Activated CD4-positive, alpha-beta T cell treated with anti-CD3 and anti-CD28 coated beads for 36 hours (primary cell): ENCODE measurements at regions of chr1 and their contacts with region 1.

Region 1: DNA sequence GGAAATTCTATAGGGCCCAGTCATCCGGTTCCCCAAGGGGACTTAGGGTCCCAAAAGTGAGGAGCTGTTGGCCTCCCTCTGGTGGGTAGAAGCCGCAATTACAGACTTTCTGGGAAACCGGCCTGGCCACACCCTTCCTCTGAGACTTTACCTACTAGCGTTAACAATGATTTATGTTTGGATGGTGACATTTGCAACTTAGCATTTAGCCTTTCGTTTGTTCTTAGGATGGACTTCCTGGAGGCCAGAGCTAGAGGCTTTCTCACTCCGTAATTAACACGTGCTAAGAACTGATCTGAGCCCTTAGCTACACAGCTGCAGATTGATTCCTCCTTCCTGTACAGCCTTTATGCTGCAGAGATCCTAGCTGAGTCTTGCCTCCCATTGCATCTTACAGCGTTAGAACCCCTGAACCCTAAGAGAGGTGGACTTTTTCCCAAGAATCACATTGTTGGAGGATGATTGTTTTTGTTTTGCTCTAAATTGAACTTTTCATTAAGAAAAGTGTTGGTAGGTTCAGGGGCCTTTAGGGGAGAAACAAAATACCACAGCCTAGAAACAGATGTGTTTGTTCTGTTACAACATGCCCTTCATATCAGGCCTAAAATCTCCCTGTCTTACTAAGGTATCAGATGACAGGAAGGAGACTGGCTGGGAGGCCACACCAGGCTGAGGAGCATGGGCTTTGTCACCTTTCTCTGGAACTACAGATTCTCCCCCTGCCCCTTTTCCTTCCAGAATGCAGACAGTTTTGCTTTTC is 2.0 kb downstream of the S100A11 start:
- DNase-seq: peak; percentile 82
- ATAC-seq: peak; percentile 64
- H3K4me3 Mint-ChIP-seq: peak overlapping the region; percentile 82
- H3K27ac Mint-ChIP-seq: peak overlapping the region; percentile 90
- H3K4me1 Mint-ChIP-seq: peaks cover 41% of the 10 kb centered on the region
- H3K27me3 Mint-ChIP-seq: no peaks in the 10 kb centered on the region

Region 2: DNA sequence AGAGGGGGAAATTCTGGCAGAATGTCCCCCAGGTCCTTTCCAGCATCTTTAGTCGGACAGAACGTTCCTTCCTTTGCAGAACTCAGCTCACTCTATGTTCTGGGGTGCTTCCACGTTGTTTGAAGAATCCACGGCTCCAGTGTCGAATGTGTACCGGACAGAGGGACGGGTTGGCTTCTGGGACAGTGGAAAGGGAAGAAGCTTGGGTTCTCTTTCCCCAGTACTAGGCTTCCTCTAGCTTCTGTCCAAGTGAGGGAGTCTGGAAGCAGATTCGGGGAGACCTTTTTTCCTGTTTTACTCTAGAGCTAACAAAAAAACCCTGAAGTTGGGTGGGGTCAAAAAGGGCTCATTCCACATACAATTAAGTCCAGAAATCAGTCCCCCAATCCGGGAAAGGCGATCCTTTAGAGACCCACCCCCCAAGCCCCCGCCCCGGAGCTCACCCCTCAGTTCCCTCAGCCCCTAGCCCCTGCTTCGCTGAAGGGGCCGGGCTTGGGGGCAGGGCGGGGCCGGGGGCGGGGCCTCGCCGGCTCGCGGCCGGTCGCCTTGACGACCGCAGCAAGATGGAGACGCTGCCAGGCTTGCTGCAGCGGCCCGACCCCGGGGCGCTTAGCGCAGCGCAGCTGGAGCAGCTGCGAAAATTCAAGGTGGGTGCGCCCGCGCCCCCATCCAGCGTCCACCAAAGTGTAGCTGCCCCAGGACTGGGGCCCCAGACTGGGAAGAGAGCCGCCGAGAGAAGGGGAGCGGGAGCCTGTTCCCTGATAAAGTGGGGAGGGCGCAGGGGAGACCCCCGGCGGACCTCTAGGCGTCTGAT is 313.6 kb before region 1 on chr1 and contains the start of gene RIIAD1:
- CTCF ChIA-PET with region 1: no interaction called
- POLR2A ChIA-PET with region 1: no interaction called
- intact Hi-C with region 1: no loop called
- DNase-seq: peak; percentile 67
- ATAC-seq: peak; percentile 89
- H3K4me3 Mint-ChIP-seq: peak within 1 kb of the TSS; percentile 61
- H3K27ac Mint-ChIP-seq: no peak within 1 kb of the TSS
- H3K4me1 Mint-ChIP-seq: peaks cover 21% of the 10 kb centered on the region
- H3K27me3 Mint-ChIP-seq: peaks cover 55% of the 10 kb centered on the region
- total RNA-seq, gene RIIAD1: not detected

Region 3: GRCh38 chr1:151846062-151846568 is 188.7 kb before region 1 on chr1:
- CTCF ChIA-PET with region 1: no interaction called
- POLR2A ChIA-PET with region 1: no interaction called
- intact Hi-C with region 1: no loop called
- DNase-seq: peak; percentile 65
- ATAC-seq: peak; percentile 80
- H3K4me3 Mint-ChIP-seq: peak overlapping the region; percentile 0
- H3K27ac Mint-ChIP-seq: peak overlapping the region; percentile 78
- H3K4me1 Mint-ChIP-seq: peaks cover 34% of the 10 kb centered on the region
- H3K27me3 Mint-ChIP-seq: no peaks in the 10 kb centered on the region

Region 4: GRCh38 chr1:151909150-151910149 is 125.4 kb before region 1 on chr1 and contains the start of gene THEM4:
- CTCF ChIA-PET with region 1: interaction called, 11 read pairs
- POLR2A ChIA-PET with region 1: interaction called, 3 read pairs
- intact Hi-C with region 1: no loop called
- DNase-seq: peak; percentile 98
- ATAC-seq: peak; percentile 93
- H3K4me3 Mint-ChIP-seq: peak within 1 kb of the TSS; percentile 82
- H3K27ac Mint-ChIP-seq: peak within 1 kb of the TSS; percentile 91
- H3K4me1 Mint-ChIP-seq: peaks cover 42% of the 10 kb centered on the region
- H3K27me3 Mint-ChIP-seq: no peaks in the 10 kb centered on the region
- total RNA-seq, gene THEM4: 23.9 to 26.0 TPM

Region 5: GRCh38 chr1:151939779-151940178 is 95.0 kb before region 1 on chr1:
- CTCF ChIA-PET with region 1: interaction called, 4 read pairs
- POLR2A ChIA-PET with region 1: no interaction called
- intact Hi-C with region 1: loop called (anchors 1 to 2 kb)
- DNase-seq: no peak
- ATAC-seq: no peak
- H3K4me3 Mint-ChIP-seq: no peak overlapping the region
- H3K27ac Mint-ChIP-seq: no peak overlapping the region
- H3K4me1 Mint-ChIP-seq: peaks cover 27% of the 10 kb centered on the region
- H3K27me3 Mint-ChIP-seq: no peaks in the 10 kb centered on the region

Region 6: GRCh38 chr1:151945725-151946364 is 89.0 kb before region 1 on chr1:
- CTCF ChIA-PET with region 1: interaction called, 4 read pairs
- POLR2A ChIA-PET with region 1: interaction called, 3 read pairs
- intact Hi-C with region 1: loop called (anchors 1 to 2 kb)
- DNase-seq: peak; percentile 82
- ATAC-seq: peak; percentile 45
- H3K4me3 Mint-ChIP-seq: peak overlapping the region; percentile 42
- H3K27ac Mint-ChIP-seq: peak overlapping the region; percentile 88
- H3K4me1 Mint-ChIP-seq: peaks cover 42% of the 10 kb centered on the region
- H3K27me3 Mint-ChIP-seq: no peaks in the 10 kb centered on the region

Region 7: GRCh38 chr1:151968058-151968457 is 66.8 kb before region 1 on chr1:
- CTCF ChIA-PET with region 1: interaction called, 35 read pairs
- POLR2A ChIA-PET with region 1: interaction called, 4 read pairs
- intact Hi-C with region 1: no loop called
- DNase-seq: peak; percentile 63
- ATAC-seq: peak; percentile 78
- H3K4me3 Mint-ChIP-seq: no peak overlapping the region
- H3K27ac Mint-ChIP-seq: no peak overlapping the region
- H3K4me1 Mint-ChIP-seq: peaks cover 18% of the 10 kb centered on the region
- H3K27me3 Mint-ChIP-seq: no peaks in the 10 kb centered on the region

Region 8: DNA sequence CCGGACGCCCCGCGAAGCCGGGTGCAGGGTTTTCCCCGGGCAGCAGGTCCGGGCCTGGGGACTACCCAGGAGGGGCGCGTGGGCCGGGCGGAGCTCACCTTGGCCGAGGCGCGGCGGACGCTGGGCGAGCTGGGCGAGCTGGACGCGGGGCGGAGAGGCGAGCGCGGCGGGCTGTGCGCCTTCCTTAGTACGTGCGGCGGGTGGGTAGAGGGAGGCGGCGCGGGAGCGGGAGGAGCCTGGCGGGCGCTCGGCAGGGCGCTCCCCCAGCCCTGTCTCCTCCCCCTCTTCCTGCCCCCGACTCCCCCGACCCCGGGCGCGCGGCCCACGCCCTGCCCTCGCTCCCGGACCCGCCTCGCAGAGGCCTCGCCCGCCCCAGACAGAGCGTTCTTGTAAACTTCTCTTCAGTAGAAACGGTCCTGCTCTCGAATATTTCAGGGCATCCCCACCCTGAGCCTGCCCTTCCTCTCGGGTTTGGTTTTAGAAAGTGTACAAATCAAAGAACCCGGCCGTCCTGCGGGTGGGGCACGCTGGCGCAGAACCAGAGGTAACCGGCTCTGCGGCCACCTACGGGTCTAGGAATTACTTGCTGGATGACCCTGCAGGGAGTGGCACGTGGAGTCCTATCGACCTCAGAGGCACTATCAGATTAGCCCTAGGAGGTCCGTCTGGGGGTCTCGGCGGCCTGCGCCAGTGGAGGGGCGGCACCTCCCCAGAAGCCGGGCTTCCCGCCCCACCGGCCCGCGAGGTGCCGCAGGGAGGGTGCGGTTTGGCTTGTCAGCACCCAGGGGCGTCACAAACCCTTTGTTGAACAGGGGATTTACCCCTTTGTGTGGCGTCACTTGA is 41.0 kb before region 1 on chr1 and contains the start of gene S100A10:
- CTCF ChIA-PET with region 1: interaction called, 5 read pairs
- POLR2A ChIA-PET with region 1: no interaction called
- intact Hi-C with region 1: loop called in 1 of 2 experiments (anchors 2 kb)
- DNase-seq: peak; percentile 85
- ATAC-seq: peak; percentile 79
- H3K4me3 Mint-ChIP-seq: peak within 1 kb of the TSS; percentile 90
- H3K27ac Mint-ChIP-seq: peak within 1 kb of the TSS; percentile 94
- H3K4me1 Mint-ChIP-seq: peaks cover 48% of the 10 kb centered on the region
- H3K27me3 Mint-ChIP-seq: no peaks in the 10 kb centered on the region
- total RNA-seq, gene S100A10: 230 to 246 TPM

Region 9: GRCh38 chr1:152013664-152014237 is 21.1 kb before region 1 on chr1:
- CTCF ChIA-PET with region 1: interaction called, 22 read pairs
- POLR2A ChIA-PET with region 1: no interaction called
- intact Hi-C with region 1: no loop called
- DNase-seq: peak; percentile 72
- ATAC-seq: peak; percentile 49
- H3K4me3 Mint-ChIP-seq: no peak overlapping the region
- H3K27ac Mint-ChIP-seq: no peak overlapping the region
- H3K4me1 Mint-ChIP-seq: peaks cover 3% of the 10 kb centered on the region
- H3K27me3 Mint-ChIP-seq: peaks cover 9% of the 10 kb centered on the region

Region 10: DNA sequence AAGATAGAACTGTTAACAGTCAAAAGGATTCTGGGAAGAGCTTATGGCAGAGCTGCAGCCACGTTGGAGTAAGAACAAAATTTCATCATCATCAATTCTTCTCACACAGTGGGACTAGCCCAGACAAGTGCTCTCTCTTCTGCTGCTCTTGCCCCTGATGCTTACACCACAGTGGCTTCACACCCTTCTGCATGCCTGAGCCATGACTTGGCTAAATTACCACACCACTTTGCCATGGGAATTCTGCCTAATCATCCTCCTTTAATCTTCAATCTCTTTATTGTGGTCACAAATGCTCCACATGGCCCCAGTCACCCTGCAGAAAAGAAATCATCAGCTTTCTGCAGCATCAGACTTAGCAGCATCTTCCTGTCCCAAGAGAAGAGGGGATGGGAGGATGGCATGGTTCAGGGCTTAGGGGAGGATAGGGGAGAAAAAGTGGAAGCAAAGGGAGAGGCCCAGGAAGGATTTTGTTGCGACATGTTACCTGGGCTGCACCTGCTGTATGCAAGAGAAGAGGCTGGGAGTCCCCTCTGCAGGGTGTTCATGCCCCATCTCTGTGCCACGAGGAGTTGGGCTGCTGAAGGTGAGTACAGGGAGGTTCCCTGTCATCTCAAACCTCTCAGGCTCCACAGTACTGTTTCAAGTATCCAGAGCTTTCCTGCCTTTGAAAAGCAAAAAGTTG is 133.2 kb after region 1 on chr1:
- CTCF ChIA-PET with region 1: no interaction called
- POLR2A ChIA-PET with region 1: no interaction called
- intact Hi-C with region 1: no loop called
- DNase-seq: no peak
- ATAC-seq: no peak
- H3K4me3 Mint-ChIP-seq: no peak overlapping the region
- H3K27ac Mint-ChIP-seq: no peak overlapping the region
- H3K4me1 Mint-ChIP-seq: peaks cover 7% of the 10 kb centered on the region
- H3K27me3 Mint-ChIP-seq: peaks cover 4% of the 10 kb centered on the region